CD8-positive, alpha-beta T cell (primary cell): ENCODE measurements at regions of chr3 and their contacts with region 1.

Region 1: DNA sequence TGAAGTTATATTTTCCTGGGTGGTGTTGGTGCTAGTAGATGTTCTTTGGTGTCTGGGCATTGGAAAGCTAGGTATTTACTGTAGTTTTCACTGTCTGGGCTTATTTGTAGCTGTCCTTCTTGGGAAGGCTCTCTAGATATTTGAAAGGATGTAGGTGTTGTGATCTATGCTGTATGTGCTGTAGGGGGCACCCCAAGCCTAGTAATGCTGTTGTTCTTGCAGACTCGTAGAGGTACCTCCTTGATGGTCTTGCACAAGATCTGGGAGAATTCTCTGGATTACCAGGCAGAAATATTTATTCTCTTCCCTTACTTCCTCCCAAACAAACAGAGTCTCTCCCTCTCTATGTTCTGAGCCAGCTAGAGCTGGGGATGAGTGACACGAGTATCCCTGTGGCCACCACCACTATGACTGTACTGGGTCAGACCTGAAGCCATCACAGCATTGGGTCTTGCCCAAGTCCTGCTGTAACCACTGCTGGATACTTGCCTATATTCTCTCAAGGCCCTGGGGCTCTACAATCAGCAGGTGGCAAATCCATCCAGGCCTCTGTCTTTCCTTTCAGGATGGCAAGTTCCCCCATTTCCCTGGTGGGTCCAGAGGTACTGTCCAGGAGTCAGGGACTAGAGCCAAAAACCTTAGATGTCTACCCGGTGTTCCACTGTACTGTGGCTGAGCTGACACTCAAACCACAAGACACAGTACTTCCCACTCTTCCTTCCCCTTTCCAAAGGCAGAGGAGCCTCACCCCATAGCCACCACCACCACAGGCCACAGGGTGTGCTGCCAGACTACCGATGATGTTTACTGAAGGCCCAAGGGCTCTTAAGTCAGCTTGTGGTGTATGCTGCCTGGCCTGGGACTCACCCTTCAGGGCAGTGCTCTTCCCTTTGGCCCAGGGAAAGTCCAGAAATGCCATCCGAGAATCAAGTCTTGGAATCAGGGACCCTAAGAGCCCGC is 195.2 kb upstream of the DPPA4 start:
- DNase-seq: peak in 8 of 9 experiments; percentile 11 to 67 (median 45)
- ATAC-seq: peak; percentile 40
- H3K4me3 ChIP-seq: no peak overlapping the region
- H3K4me3 Mint-ChIP-seq: no peak overlapping the region
- H3K27ac ChIP-seq: no peak overlapping the region
- H3K27ac Mint-ChIP-seq: no peak overlapping the region
- H3K4me1 ChIP-seq: no peaks in the 10 kb centered on the region
- H3K4me1 Mint-ChIP-seq: no peaks in the 10 kb centered on the region
- H3K27me3 ChIP-seq: no peaks in the 10 kb centered on the region
- H3K27me3 Mint-ChIP-seq: peaks cover 2% of the 10 kb centered on the region
- CTCF ChIP-seq: no peak

Region 2: GRCh38 chr3:108946292-108947290 is 585.9 kb before region 1 on chr3:
- CTCF ChIA-PET with region 1: no interaction called
- POLR2A ChIA-PET with region 1: no interaction called
- intact Hi-C with region 1: no loop called
- DNase-seq: no peak
- ATAC-seq: no peak
- H3K4me3 ChIP-seq: no peak overlapping the region
- H3K4me3 Mint-ChIP-seq: no peak overlapping the region
- H3K27ac ChIP-seq: no peak overlapping the region
- H3K27ac Mint-ChIP-seq: no peak overlapping the region
- H3K4me1 ChIP-seq: no peaks in the 10 kb centered on the region
- H3K4me1 Mint-ChIP-seq: no peaks in the 10 kb centered on the region
- H3K27me3 ChIP-seq: no peaks in the 10 kb centered on the region
- H3K27me3 Mint-ChIP-seq: peaks cover 8% of the 10 kb centered on the region
- CTCF ChIP-seq: no peak

Region 3: DNA sequence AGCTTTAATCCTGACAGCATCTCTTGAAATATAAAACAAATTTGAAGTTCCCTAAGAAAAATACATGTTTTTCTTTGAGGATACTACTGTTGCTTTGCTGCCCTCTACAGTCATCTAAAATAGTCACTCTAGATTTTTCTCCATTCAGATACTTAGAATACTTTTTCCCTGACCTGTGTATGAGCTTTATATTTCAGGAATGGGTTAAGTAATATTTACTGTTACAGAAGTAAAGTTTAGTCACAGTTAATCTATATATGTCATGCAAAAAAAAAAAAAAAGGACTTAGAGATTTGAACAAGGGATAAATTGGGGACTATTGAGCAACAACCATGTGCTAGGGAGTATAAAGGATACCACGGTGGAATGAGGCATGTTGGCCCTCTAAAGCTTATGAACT is 1547.9 kb after region 1 on chr3:
- CTCF ChIA-PET with region 1: no interaction called
- POLR2A ChIA-PET with region 1: no interaction called
- intact Hi-C with region 1: loop called in 1 of 2 experiments (anchors 2 kb)
- DNase-seq: peak in 2 of 9 experiments; percentile 27 to 42
- ATAC-seq: no peak
- H3K4me3 ChIP-seq: no peak overlapping the region
- H3K4me3 Mint-ChIP-seq: no peak overlapping the region
- H3K27ac ChIP-seq: no peak overlapping the region
- H3K27ac Mint-ChIP-seq: no peak overlapping the region
- H3K4me1 ChIP-seq: no peaks in the 10 kb centered on the region
- H3K4me1 Mint-ChIP-seq: no peaks in the 10 kb centered on the region
- H3K27me3 ChIP-seq: no peaks in the 10 kb centered on the region
- H3K27me3 Mint-ChIP-seq: peaks cover 9% of the 10 kb centered on the region
- CTCF ChIP-seq: peak; percentile 67

Region 4: GRCh38 chr3:111338059-111338698 is 1805.6 kb after region 1 on chr3:
- CTCF ChIA-PET with region 1: no interaction called
- POLR2A ChIA-PET with region 1: no interaction called
- intact Hi-C with region 1: loop called in 1 of 2 experiments (anchors 5 kb)
- DNase-seq: peak in 8 of 9 experiments; percentile 11 to 63 (median 40)
- ATAC-seq: no peak
- H3K4me3 ChIP-seq: no peak overlapping the region
- H3K4me3 Mint-ChIP-seq: no peak overlapping the region
- H3K27ac ChIP-seq: no peak overlapping the region
- H3K27ac Mint-ChIP-seq: no peak overlapping the region
- H3K4me1 ChIP-seq: no peaks in the 10 kb centered on the region
- H3K4me1 Mint-ChIP-seq: peaks cover 10% of the 10 kb centered on the region
- H3K27me3 ChIP-seq: no peaks in the 10 kb centered on the region
- H3K27me3 Mint-ChIP-seq: no peaks in the 10 kb centered on the region
- CTCF ChIP-seq: peak; percentile 53